WTC11 (cell line): ENCODE measurements at regions of chr22 and their contacts with region 1.

Region 1: GRCh38 chr22:36977947-36978660 is 41.1 kb downstream of the TST start:
- DNase-seq: peak; percentile 91
- ATAC-seq: peak; percentile 65
- H3K4me3 Mint-ChIP-seq: peak overlapping the region; percentile 77
- H3K27ac Mint-ChIP-seq: no peak overlapping the region
- H3K4me1 Mint-ChIP-seq: peaks cover 13% of the 10 kb centered on the region
- H3K27me3 Mint-ChIP-seq: peaks cover 15% of the 10 kb centered on the region
- CTCF ChIP-seq: peak; percentile 90

Region 2: DNA sequence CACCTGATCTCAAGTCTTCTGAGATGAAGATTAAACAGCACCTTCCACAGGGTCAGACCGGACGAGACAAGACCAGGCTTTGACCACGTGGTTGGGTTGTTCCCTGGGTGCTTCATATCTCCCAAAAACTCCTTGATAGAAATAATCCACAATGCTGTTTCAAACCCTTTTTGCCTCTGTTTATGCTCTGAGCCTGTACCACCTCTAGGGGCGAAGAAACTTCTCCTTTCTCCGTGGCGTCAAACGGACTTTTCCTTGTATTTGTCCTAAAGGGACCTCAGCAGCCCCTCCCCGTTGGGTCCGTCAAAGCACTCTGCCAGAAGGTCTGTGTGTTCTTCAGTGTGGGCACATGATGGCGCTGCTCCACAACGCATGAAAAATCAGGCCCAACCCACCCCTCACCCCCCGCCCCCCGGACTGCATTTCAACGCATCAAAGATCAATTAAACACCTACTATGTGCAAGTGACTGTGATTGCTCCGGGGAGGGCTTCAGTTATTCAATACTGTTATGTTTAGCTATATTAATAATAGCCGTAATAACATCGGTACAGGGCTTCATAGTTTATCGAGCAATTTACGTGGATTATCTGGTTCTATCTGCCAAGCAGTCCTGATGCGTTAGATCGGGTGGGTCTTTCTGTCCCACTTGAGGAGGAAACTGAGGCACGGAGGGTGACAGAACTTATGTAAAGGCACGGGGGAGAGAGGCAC is 431.9 kb before region 1 on chr22:
- CTCF ChIA-PET with region 1: interaction called, 12 read pairs
- POLR2A ChIA-PET with region 1: interaction called, 3 read pairs
- DNase-seq: peak; percentile 79
- ATAC-seq: peak; percentile 84
- H3K4me3 Mint-ChIP-seq: peak overlapping the region; percentile 44
- H3K27ac Mint-ChIP-seq: no peak overlapping the region
- H3K4me1 Mint-ChIP-seq: peaks cover 24% of the 10 kb centered on the region
- H3K27me3 Mint-ChIP-seq: peaks cover 14% of the 10 kb centered on the region
- CTCF ChIP-seq: peak; percentile 72

Region 3: GRCh38 chr22:36659762-36660509 is 318.2 kb before region 1 on chr22:
- CTCF ChIA-PET with region 1: no interaction called
- POLR2A ChIA-PET with region 1: no interaction called
- DNase-seq: no peak
- ATAC-seq: no peak
- H3K4me3 Mint-ChIP-seq: no peak overlapping the region
- H3K27ac Mint-ChIP-seq: no peak overlapping the region
- H3K4me1 Mint-ChIP-seq: peaks cover 2% of the 10 kb centered on the region; the same call in 1 of the 2 replicates
- H3K27me3 Mint-ChIP-seq: no peaks in the 10 kb centered on the region
- CTCF ChIP-seq: no peak

Region 4: GRCh38 chr22:36781656-36782627 is 196.2 kb before region 1 on chr22:
- CTCF ChIA-PET with region 1: interaction called, 35 read pairs
- POLR2A ChIA-PET with region 1: no interaction called
- DNase-seq: peak; percentile 91
- ATAC-seq: peak; percentile 93
- H3K4me3 Mint-ChIP-seq: no peak overlapping the region; the same call in none of the 2 replicates
- H3K27ac Mint-ChIP-seq: no peak overlapping the region
- H3K4me1 Mint-ChIP-seq: peaks cover 23% of the 10 kb centered on the region
- H3K27me3 Mint-ChIP-seq: peaks cover 40% of the 10 kb centered on the region
- CTCF ChIP-seq: peak; percentile 82

Region 5: DNA sequence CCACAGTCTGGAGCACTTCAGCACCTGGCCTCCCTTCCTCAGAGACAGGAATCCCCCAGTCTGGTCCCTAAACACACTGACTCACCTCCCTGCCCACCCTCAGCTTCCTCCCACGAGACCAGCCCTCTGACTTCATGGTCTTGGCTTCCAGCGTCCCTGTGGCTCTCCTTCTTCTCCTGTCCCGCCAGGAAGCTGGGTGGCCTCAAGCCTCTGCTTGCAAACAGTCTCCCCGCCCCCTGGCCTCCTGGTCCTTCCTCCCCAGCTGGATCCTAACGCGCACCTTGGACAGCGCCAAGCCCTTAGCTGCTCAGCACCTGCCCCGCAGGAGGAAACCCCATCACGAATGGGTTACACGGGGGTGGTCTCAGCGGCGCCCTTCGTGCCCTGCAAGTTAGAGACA is 112.8 kb before region 1 on chr22:
- CTCF ChIA-PET with region 1: interaction called, 14 read pairs
- POLR2A ChIA-PET with region 1: no interaction called
- DNase-seq: peak; percentile 34
- ATAC-seq: no peak
- H3K4me3 Mint-ChIP-seq: no peak overlapping the region
- H3K27ac Mint-ChIP-seq: no peak overlapping the region
- H3K4me1 Mint-ChIP-seq: peaks cover 3% of the 10 kb centered on the region
- H3K27me3 Mint-ChIP-seq: peaks cover 12% of the 10 kb centered on the region; the same call in 1 of the 2 replicates
- CTCF ChIP-seq: no peak

Region 6: DNA sequence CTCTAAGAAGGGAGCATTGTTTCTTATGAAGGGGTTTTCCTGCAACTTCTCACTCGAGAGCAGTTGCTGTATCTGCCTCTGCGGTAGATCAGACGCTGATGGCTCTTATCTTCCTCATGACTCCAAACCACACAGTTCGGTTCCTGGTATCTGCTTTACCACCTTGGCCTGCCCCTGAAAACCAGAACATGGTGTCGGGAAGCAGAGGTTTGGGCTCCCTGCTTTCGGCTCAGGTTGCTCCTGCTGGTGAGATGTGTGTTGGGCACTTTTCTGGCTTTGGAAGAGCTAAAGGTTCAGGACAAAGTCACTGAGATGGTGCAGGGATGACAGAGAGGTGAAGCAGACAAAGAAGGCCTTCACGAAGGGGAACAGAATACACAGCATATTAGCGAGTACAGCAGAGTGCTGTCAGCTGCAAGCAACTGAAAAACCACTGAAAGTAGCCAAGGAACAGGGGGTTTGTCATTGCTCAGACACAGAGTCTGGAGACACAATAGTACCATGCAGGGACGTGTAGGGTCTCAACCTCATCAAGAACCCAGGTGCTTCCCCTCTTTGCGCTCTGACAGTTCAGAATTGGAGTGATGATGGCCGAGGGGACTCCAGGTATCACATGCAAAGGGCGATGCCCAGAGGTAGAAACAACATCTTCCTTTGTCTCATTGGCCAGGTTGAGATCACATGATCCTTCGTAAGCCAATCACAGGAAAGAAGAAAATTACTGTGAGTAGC is 76.5 kb before region 1 on chr22:
- CTCF ChIA-PET with region 1: interaction called, 25 read pairs
- POLR2A ChIA-PET with region 1: no interaction called
- DNase-seq: no peak
- ATAC-seq: no peak; the same call in 1 of the 2 replicates
- H3K4me3 Mint-ChIP-seq: peak overlapping the region; percentile 20; the same call in 1 of the 2 replicates
- H3K27ac Mint-ChIP-seq: peak overlapping the region; percentile 93
- H3K4me1 Mint-ChIP-seq: peaks cover 27% of the 10 kb centered on the region
- H3K27me3 Mint-ChIP-seq: peaks cover 47% of the 10 kb centered on the region
- CTCF ChIP-seq: no peak

Region 7: GRCh38 chr22:36958366-36958765 is 19.7 kb before region 1 on chr22:
- CTCF ChIA-PET with region 1: interaction called, 41 read pairs
- POLR2A ChIA-PET with region 1: no interaction called
- DNase-seq: no peak
- ATAC-seq: no peak
- H3K4me3 Mint-ChIP-seq: no peak overlapping the region
- H3K27ac Mint-ChIP-seq: no peak overlapping the region
- H3K4me1 Mint-ChIP-seq: peaks cover 22% of the 10 kb centered on the region
- H3K27me3 Mint-ChIP-seq: peaks cover 27% of the 10 kb centered on the region
- CTCF ChIP-seq: no peak

Region 8: GRCh38 chr22:37019309-37020125 is 41.4 kb after region 1 on chr22 and contains the starts of genes MPST and TST:
- CTCF ChIA-PET with region 1: interaction called, 19 read pairs
- POLR2A ChIA-PET with region 1: no interaction called
- DNase-seq: peak; percentile 65
- ATAC-seq: peak; percentile 75
- H3K4me3 Mint-ChIP-seq: peak within 1 kb of the TSS; percentile 89
- H3K27ac Mint-ChIP-seq: peak within 1 kb of the TSS; percentile 87; the same call in 1 of the 2 replicates
- H3K4me1 Mint-ChIP-seq: peaks cover 31% of the 10 kb centered on the region
- H3K27me3 Mint-ChIP-seq: no peaks in the 10 kb centered on the region
- CTCF ChIP-seq: no peak
- total RNA-seq, gene MPST: 86.6 to 101 TPM (median 98.7 TPM) in 3 replicates
- total RNA-seq, gene TST: 24.4 to 33.3 TPM (median 32.8 TPM) in 3 replicates

Region 9: DNA sequence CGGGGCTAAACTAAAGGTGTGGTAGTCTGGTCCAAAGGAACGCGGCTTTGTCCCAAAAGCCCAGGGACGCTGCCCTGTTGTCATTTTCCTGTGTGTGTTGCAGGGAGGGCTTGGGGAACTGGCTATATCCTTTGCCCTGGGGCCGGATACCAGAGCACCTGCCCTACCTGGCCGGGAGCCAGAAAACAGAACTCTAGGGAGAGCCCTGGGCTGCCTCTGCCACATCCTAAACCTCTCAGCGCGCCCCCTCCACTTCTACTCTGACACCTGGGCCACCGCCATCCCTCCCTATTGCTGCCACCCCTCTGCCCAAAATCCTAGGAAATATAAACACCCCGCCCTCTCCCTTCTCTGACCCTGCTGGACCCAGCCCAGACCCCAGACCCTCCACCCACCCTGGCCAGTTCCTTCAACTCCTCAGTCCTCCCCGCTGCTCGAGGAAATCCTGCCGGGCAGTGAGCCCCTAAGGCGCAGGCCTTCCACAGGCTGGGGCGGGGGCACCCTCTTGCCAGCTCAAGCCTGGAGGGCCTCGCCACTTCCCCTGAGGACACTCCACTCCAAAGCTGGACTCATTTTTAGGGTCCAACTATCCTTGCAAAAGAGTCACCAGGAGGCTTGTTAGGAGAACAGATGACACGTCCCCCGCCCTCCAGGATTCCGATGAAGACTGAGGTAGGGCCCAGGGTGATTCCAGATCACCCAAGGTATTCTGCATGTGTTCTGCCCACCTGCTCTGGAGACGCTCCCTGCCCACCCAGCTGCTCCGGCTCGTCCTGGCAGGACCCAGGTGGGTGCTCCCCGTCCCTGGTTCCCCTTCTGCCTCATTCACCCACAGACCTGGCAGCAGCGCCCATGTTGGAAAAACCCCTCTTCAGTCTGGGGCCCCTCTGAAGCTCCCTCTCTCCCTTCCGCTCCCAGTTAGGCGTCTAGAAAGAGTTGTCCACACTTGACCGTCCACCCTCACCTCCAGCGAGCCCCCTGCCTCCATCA is 85.6 kb after region 1 on chr22:
- CTCF ChIA-PET with region 1: no interaction called
- POLR2A ChIA-PET with region 1: no interaction called
- DNase-seq: no peak
- ATAC-seq: no peak
- H3K4me3 Mint-ChIP-seq: no peak overlapping the region
- H3K27ac Mint-ChIP-seq: no peak overlapping the region
- H3K4me1 Mint-ChIP-seq: peaks cover 19% of the 10 kb centered on the region
- H3K27me3 Mint-ChIP-seq: peaks cover 36% of the 10 kb centered on the region
- CTCF ChIP-seq: no peak